Adrenal gland (tissue), 19 donors: ENCODE measurements at regions of chr20 and their contacts with region 1.

Region 1: GRCh38 chr20:5658912-5659345 is 91.3 kb upstream of the SHLD1 start:
- DNase-seq: peak; percentile 81 to 96 (median 89)
- H3K4me3 ChIP-seq: peak overlapping the region in 1 of 4 donors; percentile 21
- H3K27ac ChIP-seq: peak overlapping the region; percentile 10 to 86 (median 79)
- H3K4me1 ChIP-seq: peaks cover 32 to 40% of the 10 kb centered on the region in 2 donors
- H3K27me3 ChIP-seq: no peaks in the 10 kb centered on the region
- CTCF ChIP-seq: no peak
- POLR2A ChIP-seq: peak in 1 of 2 donors; percentile 15

Region 2: GRCh38 chr20:5596401-5597193 is 62.3 kb before region 1 on chr20:
- intact Hi-C with region 1: no loop called
- DNase-seq: peak in 1 of 7 donors; percentile 17
- H3K4me3 ChIP-seq: no peak overlapping the region
- H3K27ac ChIP-seq: peak overlapping the region in 2 of 5 donors; percentile 8 to 23
- H3K4me1 ChIP-seq: peaks cover 19 to 48% of the 10 kb centered on the region in 2 donors
- H3K27me3 ChIP-seq: no peaks in the 10 kb centered on the region
- CTCF ChIP-seq: no peak
- POLR2A ChIP-seq: no peak

Region 3: DNA sequence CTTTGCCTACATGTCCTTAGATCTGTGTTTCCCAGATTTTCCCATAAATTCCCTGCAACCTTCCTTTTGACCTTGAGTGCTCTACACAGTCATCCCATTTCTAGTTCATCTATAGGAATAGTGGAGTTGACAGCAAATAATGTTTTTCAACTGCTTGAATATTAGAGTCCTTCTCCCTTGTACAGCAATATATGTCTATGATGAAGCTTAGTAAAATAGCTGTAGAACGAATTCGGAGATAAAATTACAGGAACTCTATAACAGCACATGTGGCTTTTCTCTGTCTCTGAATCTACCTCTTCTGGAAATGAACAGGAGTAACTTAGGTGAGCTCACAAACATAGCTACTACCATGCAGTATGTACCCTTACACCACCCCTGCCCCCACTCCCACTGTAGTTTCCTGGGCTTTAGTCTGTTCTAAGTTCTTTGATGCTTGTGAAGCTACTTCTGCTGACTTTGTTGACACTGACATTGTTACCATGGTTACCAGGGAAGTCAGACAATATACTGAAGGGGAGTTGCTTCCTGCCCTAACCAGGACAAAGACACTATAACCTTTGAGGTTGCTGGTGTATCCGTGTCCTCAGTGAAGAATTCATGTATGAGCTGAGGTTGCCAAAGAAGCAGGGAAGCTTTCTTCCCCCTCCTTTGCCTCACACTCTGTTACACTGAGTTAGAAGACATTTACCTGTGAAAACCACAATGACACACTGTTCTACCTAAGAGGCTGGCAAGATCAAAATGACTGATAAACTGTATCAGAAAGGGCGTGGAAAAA is 55.5 kb after region 1 on chr20:
- intact Hi-C with region 1: loop called in 1 of 2 experiments (anchors 10 kb)
- DNase-seq: peak in 2 of 7 donors; percentile 18 to 63
- H3K4me3 ChIP-seq: no peak overlapping the region
- H3K27ac ChIP-seq: peak overlapping the region in 1 of 5 donors; percentile 3
- H3K4me1 ChIP-seq: peaks cover 9% of the 10 kb centered on the region in 2 donors
- H3K27me3 ChIP-seq: no peaks in the 10 kb centered on the region
- CTCF ChIP-seq: no peak
- POLR2A ChIP-seq: no peak